Naive thymus-derived CD4-positive, alpha-beta T cell (primary cell): ENCODE measurements at regions of chr19 and their contacts with region 1.

Region 1: GRCh38 chr19:43463381-43464136 is 1.8 kb downstream of the LYPD3 start:
- DNase-seq: peak; percentile 94 to 100 (median 99)
- ATAC-seq: peak; percentile 92
- H3K4me3 ChIP-seq: peak overlapping the region; percentile 92
- H3K4me3 Mint-ChIP-seq: peak overlapping the region; percentile 87 to 99 (median 94)
- H3K27ac ChIP-seq: peak overlapping the region; percentile 92
- H3K27ac Mint-ChIP-seq: peak overlapping the region; percentile 89 to 100 (median 99)
- H3K4me1 ChIP-seq: peaks cover 8 to 19% of the 10 kb centered on the region in 2 donors
- H3K4me1 Mint-ChIP-seq: peaks cover 24 to 67% (median 51%) of the 10 kb centered on the region in 7 donors
- H3K27me3 ChIP-seq: no peaks in the 10 kb centered on the region
- H3K27me3 Mint-ChIP-seq: peaks cover 0 to 2% (median 0%) of the 10 kb centered on the region in 5 donors

Region 2: DNA sequence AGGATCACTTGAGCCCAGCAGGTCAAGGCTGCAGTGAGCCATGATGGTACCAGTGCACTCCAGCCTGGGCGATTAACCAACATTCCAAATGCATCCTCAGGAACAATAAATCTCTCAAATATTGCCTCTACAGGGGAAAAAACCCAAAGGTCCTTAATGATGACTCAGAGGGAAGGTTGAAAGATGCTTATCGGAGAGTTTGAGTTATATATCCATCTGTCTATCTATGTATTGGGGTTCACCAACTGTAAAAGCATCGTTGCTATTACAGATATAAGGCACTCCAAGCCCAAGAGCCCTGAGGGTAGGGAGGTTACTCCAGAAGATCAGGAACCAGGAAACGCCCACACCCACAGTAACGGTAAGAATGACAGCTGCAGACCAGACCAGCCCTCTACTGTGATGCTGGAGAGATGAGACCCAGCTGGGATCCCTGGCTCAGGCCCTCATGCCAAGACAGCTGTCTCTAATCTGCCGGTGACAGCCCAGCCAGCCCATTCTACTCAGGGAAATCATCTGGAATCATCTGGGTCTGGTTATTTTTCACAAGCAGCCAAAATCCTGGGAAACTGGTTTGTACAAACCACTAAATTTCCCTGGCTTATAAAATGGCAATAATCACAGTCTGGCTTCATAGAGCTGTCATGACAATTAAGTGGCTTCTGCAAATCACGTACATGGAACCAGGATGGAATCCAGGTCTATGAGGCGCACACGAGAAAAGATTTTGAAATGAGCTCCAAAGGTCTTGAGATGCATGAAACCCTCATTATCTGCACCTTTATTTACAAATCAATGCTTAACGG is 25.1 kb before region 1 on chr19:
- CTCF ChIA-PET with region 1: interaction called, 10 read pairs
- POLR2A ChIA-PET with region 1: interaction called, 29 read pairs
- intact Hi-C with region 1: loop called in 1 of 2 experiments (anchors 1 kb)
- DNase-seq: peak in 2 of 9 donors; percentile 19 to 21
- ATAC-seq: peak; percentile 4
- H3K4me3 ChIP-seq: peak overlapping the region; percentile 33
- H3K4me3 Mint-ChIP-seq: peak overlapping the region; percentile 49 to 77 (median 64)
- H3K27ac ChIP-seq: peak overlapping the region; percentile 72
- H3K27ac Mint-ChIP-seq: peak overlapping the region; percentile 81 to 99 (median 93)
- H3K4me1 ChIP-seq: peaks cover 23 to 30% of the 10 kb centered on the region in 2 donors
- H3K4me1 Mint-ChIP-seq: peaks cover 29 to 75% (median 62%) of the 10 kb centered on the region in 7 donors
- H3K27me3 ChIP-seq: no peaks in the 10 kb centered on the region
- H3K27me3 Mint-ChIP-seq: peaks cover 0 to 2% (median 0%) of the 10 kb centered on the region in 5 donors

Region 3: GRCh38 chr19:43474986-43475705 is 11.6 kb after region 1 on chr19:
- CTCF ChIA-PET with region 1: interaction called, 4 read pairs
- POLR2A ChIA-PET with region 1: interaction called, 64 read pairs
- intact Hi-C with region 1: loop called (anchors 1 kb)
- DNase-seq: peak; percentile 95 to 99 (median 98)
- ATAC-seq: peak; percentile 93
- H3K4me3 ChIP-seq: peak overlapping the region; percentile 77
- H3K4me3 Mint-ChIP-seq: peak overlapping the region; percentile 75 to 93 (median 86)
- H3K27ac ChIP-seq: peak overlapping the region; percentile 92
- H3K27ac Mint-ChIP-seq: peak overlapping the region; percentile 93 to 100 (median 98)
- H3K4me1 ChIP-seq: peaks cover 9 to 30% of the 10 kb centered on the region in 2 donors
- H3K4me1 Mint-ChIP-seq: peaks cover 13 to 55% (median 41%) of the 10 kb centered on the region in 7 donors
- H3K27me3 ChIP-seq: no peaks in the 10 kb centered on the region
- H3K27me3 Mint-ChIP-seq: no peaks in the 10 kb centered on the region

Region 4: DNA sequence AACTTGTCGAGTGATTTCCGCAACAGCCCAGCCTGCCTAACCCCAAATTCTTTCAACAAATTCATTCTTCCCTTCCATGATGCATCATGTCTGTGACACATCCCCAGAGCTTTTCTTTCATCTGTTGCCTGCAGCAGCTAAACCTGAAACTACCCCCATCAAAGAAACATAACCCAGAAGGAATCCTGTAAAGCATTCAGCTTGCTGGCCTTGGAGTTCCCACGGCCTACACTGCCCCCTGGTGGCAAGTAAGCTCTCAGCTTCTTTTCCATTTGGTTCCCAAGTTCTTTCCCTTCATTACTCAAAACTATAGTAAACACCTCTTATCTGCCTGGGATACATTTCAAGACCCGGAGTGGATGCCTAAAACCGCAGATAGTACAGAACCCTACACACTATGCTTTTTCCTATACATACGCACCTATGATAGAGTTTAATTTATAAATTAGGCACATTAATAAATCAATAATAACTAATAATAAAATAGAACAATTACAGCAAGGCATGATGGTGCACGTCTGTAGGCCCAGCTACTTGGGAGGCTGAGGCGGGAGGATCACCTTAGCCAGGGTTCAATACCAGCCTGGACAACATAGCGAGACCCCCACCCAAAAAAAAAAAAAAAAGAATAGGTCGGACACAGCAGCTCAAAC is 56.0 kb after region 1 on chr19:
- CTCF ChIA-PET with region 1: interaction called, 10 read pairs
- POLR2A ChIA-PET with region 1: interaction called, 8 read pairs
- intact Hi-C with region 1: no loop called
- DNase-seq: peak; percentile 64 to 85 (median 80)
- ATAC-seq: peak; percentile 97
- H3K4me3 ChIP-seq: no peak overlapping the region
- H3K4me3 Mint-ChIP-seq: peak overlapping the region in 8 of 10 donors; percentile 2 to 22 (median 6)
- H3K27ac ChIP-seq: no peak overlapping the region
- H3K27ac Mint-ChIP-seq: peak overlapping the region in 8 of 9 donors; percentile 10 to 87 (median 65)
- H3K4me1 ChIP-seq: peaks cover 4 to 5% of the 10 kb centered on the region in 2 donors
- H3K4me1 Mint-ChIP-seq: peaks cover 9 to 23% (median 18%) of the 10 kb centered on the region in 7 donors
- H3K27me3 ChIP-seq: no peaks in the 10 kb centered on the region
- H3K27me3 Mint-ChIP-seq: no peaks in the 10 kb centered on the region

Region 5: GRCh38 chr19:43532962-43533545 is 69.5 kb after region 1 on chr19 and contains the start of gene ZNF575:
- CTCF ChIA-PET with region 1: interaction called, 3 read pairs
- POLR2A ChIA-PET with region 1: interaction called, 25 read pairs
- intact Hi-C with region 1: loop called (anchors 1 kb)
- DNase-seq: peak; percentile 61 to 91 (median 87)
- ATAC-seq: peak; percentile 64
- H3K4me3 ChIP-seq: peak within 1 kb of the TSS; percentile 98
- H3K4me3 Mint-ChIP-seq: peak within 1 kb of the TSS; percentile 88 to 98 (median 95)
- H3K27ac ChIP-seq: peak within 1 kb of the TSS; percentile 68
- H3K27ac Mint-ChIP-seq: peak within 1 kb of the TSS; percentile 90 to 98 (median 95)
- H3K4me1 ChIP-seq: peaks cover 12 to 14% of the 10 kb centered on the region in 2 donors
- H3K4me1 Mint-ChIP-seq: peaks cover 5 to 27% (median 18%) of the 10 kb centered on the region in 7 donors
- H3K27me3 ChIP-seq: no peaks in the 10 kb centered on the region
- H3K27me3 Mint-ChIP-seq: no peaks in the 10 kb centered on the region
- total RNA-seq, gene ZNF575: 4.5 to 10.7 (median 5.6) TPM

Region 6: GRCh38 chr19:43619262-43620060 is 155.9 kb after region 1 on chr19 and contains the start of gene ZNF428:
- CTCF ChIA-PET with region 1: no interaction called
- POLR2A ChIA-PET with region 1: interaction called, 3 read pairs
- intact Hi-C with region 1: loop called in 1 of 2 experiments (anchors 1 kb)
- DNase-seq: peak; percentile 77 to 91 (median 84)
- ATAC-seq: peak; percentile 93
- H3K4me3 ChIP-seq: peak within 1 kb of the TSS; percentile 63
- H3K4me3 Mint-ChIP-seq: peak within 1 kb of the TSS; percentile 95 to 99 (median 98)
- H3K27ac ChIP-seq: peak within 1 kb of the TSS; percentile 83
- H3K27ac Mint-ChIP-seq: peak within 1 kb of the TSS; percentile 93 to 99 (median 97)
- H3K4me1 ChIP-seq: peaks cover 9 to 12% of the 10 kb centered on the region in 2 donors
- H3K4me1 Mint-ChIP-seq: peaks cover 18 to 59% (median 36%) of the 10 kb centered on the region in 7 donors
- H3K27me3 ChIP-seq: no peaks in the 10 kb centered on the region
- H3K27me3 Mint-ChIP-seq: no peaks in the 10 kb centered on the region
- total RNA-seq, gene ZNF428: 21.7 to 29.1 (median 25.9) TPM

Region 7: DNA sequence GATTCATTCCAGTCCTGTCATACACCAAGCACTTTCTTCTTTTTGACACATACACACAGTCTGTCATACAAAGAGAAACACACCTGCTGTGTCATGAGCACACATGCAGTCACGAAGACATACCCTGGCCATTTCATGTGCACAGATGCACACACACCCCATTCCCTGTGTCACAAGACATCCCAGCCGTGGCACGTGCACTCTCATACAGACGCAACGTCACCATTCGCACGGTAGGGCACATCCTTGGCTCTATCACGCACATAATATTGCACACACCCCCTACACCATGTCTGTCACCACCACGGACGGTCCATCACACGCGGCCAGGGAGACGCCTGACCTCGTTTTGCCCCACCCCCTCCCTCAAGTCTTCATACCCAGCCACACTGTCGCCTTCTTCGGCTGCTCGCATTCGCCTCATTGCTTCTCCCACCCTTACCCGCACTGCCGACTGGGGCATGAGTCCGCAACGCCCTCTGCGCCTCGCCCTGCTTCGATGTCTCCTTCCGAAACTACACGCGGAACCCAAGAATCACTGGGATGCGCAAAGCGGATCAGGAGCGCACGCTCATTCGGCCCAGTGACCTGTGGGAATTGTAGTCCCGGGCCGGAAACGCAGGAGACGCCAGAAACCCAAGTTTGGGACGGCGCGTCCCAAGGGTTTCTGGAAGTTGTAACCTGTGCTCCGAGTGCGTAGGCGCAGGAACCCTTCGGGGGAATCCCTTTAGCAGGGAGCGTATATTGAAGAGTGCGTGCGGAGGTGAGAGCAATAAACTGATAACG is 356.7 kb after region 1 on chr19:
- CTCF ChIA-PET with region 1: no interaction called
- POLR2A ChIA-PET with region 1: no interaction called
- intact Hi-C with region 1: no loop called
- DNase-seq: peak in 3 of 9 donors; percentile 16 to 26 (median 18)
- ATAC-seq: peak; percentile 58
- H3K4me3 ChIP-seq: peak overlapping the region; percentile 46
- H3K4me3 Mint-ChIP-seq: peak overlapping the region; percentile 85 to 98 (median 88)
- H3K27ac ChIP-seq: no peak overlapping the region
- H3K27ac Mint-ChIP-seq: peak overlapping the region in 5 of 9 donors; percentile 44 to 65 (median 56)
- H3K4me1 ChIP-seq: peaks cover 0 to 3% of the 10 kb centered on the region in 2 donors
- H3K4me1 Mint-ChIP-seq: peaks cover 6 to 12% (median 10%) of the 10 kb centered on the region in 7 donors
- H3K27me3 ChIP-seq: no peaks in the 10 kb centered on the region
- H3K27me3 Mint-ChIP-seq: peaks cover 23 to 52% (median 36%) of the 10 kb centered on the region in 5 donors